ENCODE measurements at regions of chr11 and their contacts with region 1.

Region 1: GRCh38 chr11:8263769-8264410 is at the start of gene LMO1:
- DNase-seq: peak; percentile 37 to 75 (median 63)
- ATAC-seq: peak; percentile 76
- H3K4me3 ChIP-seq: peak within 1 kb of the TSS; percentile 33
- H3K4me3 Mint-ChIP-seq: peak within 1 kb of the TSS; percentile 46 to 93 (median 79)
- H3K27ac ChIP-seq: no peak within 1 kb of the TSS
- H3K27ac Mint-ChIP-seq: peak within 1 kb of the TSS in 1 of 9 donors; percentile 74
- H3K4me1 ChIP-seq: peaks cover 0 to 10% of the 10 kb centered on the region in 2 donors
- H3K4me1 Mint-ChIP-seq: peaks cover 9 to 13% (median 12%) of the 10 kb centered on the region in 7 donors
- H3K27me3 ChIP-seq: peaks cover 0 to 16% of the 10 kb centered on the region in 2 donors
- H3K27me3 Mint-ChIP-seq: peaks cover 58 to 78% (median 67%) of the 10 kb centered on the region in 5 donors
- total RNA-seq, gene LMO1: not detected

Region 2: DNA sequence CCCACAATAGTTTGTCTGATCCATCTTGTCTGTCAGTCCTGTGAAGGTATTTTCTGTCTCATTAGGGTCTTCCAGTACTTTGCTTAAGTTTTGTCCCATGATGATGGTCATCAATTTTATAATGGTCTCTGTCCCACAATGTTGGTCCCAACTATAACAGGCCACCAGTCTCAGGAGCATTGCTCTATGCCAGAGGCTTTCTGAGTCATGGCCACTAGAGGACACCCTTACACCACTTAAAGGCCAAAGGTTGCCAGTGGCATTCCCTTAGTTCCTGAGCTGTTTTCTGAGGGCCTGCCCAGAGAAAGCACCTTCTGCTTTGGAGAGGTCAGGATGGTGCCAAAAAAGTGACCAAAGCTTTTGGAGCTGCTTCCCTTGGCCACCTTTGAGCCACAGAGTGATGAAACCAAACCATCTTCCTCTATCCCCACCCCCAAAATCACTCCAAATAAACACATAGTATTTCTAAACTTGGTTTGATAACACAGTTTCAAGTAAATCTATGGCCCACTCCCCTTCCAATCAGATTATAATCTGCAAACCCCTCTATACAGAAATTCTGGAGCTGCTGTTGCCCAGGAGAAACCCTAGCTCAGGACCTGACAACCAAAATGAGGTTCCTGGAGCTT is 257.4 kb before region 1 on chr11:
- CTCF ChIA-PET with region 1: interaction called, 3 read pairs
- POLR2A ChIA-PET with region 1: no interaction called
- intact Hi-C with region 1: loop called (anchors 2 to 10 kb)
- DNase-seq: peak in 6 of 9 donors; percentile 19 to 34 (median 28)
- ATAC-seq: peak; percentile 81
- H3K4me3 ChIP-seq: no peak overlapping the region
- H3K4me3 Mint-ChIP-seq: no peak overlapping the region
- H3K27ac ChIP-seq: no peak overlapping the region
- H3K27ac Mint-ChIP-seq: no peak overlapping the region
- H3K4me1 ChIP-seq: no peaks in the 10 kb centered on the region
- H3K4me1 Mint-ChIP-seq: no peaks in the 10 kb centered on the region
- H3K27me3 ChIP-seq: no peaks in the 10 kb centered on the region
- H3K27me3 Mint-ChIP-seq: peaks cover 0 to 11% (median 6%) of the 10 kb centered on the region in 5 donors

Region 3: GRCh38 chr11:8056810-8057463 is 207.0 kb before region 1 on chr11:
- CTCF ChIA-PET with region 1: no interaction called
- POLR2A ChIA-PET with region 1: no interaction called
- intact Hi-C with region 1: no loop called
- DNase-seq: no peak
- ATAC-seq: no peak
- H3K4me3 ChIP-seq: no peak overlapping the region
- H3K4me3 Mint-ChIP-seq: no peak overlapping the region
- H3K27ac ChIP-seq: no peak overlapping the region
- H3K27ac Mint-ChIP-seq: no peak overlapping the region
- H3K4me1 ChIP-seq: no peaks in the 10 kb centered on the region
- H3K4me1 Mint-ChIP-seq: peaks cover 0 to 5% (median 0%) of the 10 kb centered on the region in 7 donors
- H3K27me3 ChIP-seq: no peaks in the 10 kb centered on the region
- H3K27me3 Mint-ChIP-seq: peaks cover 0 to 19% (median 12%) of the 10 kb centered on the region in 5 donors

Region 4: DNA sequence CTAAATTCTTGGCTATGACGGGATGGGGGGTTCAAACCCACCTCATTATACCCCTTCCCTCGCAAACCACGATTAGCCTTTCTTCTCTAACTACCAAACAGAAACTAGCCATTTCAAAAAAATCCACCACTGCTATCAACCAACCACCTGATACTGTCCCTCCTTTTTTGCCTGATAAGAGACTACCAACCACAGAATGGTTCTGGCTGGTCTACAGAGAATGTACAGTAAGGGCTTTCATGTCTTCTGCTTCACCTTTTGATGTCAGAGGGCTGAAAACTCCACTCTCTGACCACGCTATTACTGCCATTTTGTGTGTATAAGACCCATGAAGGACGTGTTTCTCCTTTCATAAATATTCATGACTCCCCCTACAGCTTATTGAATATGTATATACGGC is 114.2 kb before region 1 on chr11:
- CTCF ChIA-PET with region 1: no interaction called
- POLR2A ChIA-PET with region 1: no interaction called
- intact Hi-C with region 1: no loop called
- DNase-seq: no peak
- ATAC-seq: no peak
- H3K4me3 ChIP-seq: no peak overlapping the region
- H3K4me3 Mint-ChIP-seq: no peak overlapping the region
- H3K27ac ChIP-seq: no peak overlapping the region
- H3K27ac Mint-ChIP-seq: no peak overlapping the region
- H3K4me1 ChIP-seq: no peaks in the 10 kb centered on the region
- H3K4me1 Mint-ChIP-seq: peaks cover 0 to 5% (median 0%) of the 10 kb centered on the region in 7 donors
- H3K27me3 ChIP-seq: no peaks in the 10 kb centered on the region
- H3K27me3 Mint-ChIP-seq: no peaks in the 10 kb centered on the region

Region 5: GRCh38 chr11:8192016-8192895 is 71.6 kb before region 1 on chr11:
- CTCF ChIA-PET with region 1: interaction called, 3 read pairs
- POLR2A ChIA-PET with region 1: no interaction called
- intact Hi-C with region 1: loop called (anchors 1 to 2 kb)
- DNase-seq: peak in 5 of 9 donors; percentile 10 to 30 (median 19)
- ATAC-seq: peak; percentile 75
- H3K4me3 ChIP-seq: no peak overlapping the region
- H3K4me3 Mint-ChIP-seq: no peak overlapping the region
- H3K27ac ChIP-seq: no peak overlapping the region
- H3K27ac Mint-ChIP-seq: no peak overlapping the region
- H3K4me1 ChIP-seq: no peaks in the 10 kb centered on the region
- H3K4me1 Mint-ChIP-seq: peaks cover 0 to 3% (median 0%) of the 10 kb centered on the region in 7 donors
- H3K27me3 ChIP-seq: no peaks in the 10 kb centered on the region
- H3K27me3 Mint-ChIP-seq: peaks cover 4 to 46% (median 42%) of the 10 kb centered on the region in 5 donors

Region 6: GRCh38 chr11:8225589-8226036 is 38.3 kb before region 1 on chr11:
- CTCF ChIA-PET with region 1: interaction called, 8 read pairs
- POLR2A ChIA-PET with region 1: no interaction called
- intact Hi-C with region 1: loop called (anchors 1 kb)
- DNase-seq: peak; percentile 11 to 66 (median 48)
- ATAC-seq: peak; percentile 65
- H3K4me3 ChIP-seq: no peak overlapping the region
- H3K4me3 Mint-ChIP-seq: no peak overlapping the region
- H3K27ac ChIP-seq: no peak overlapping the region
- H3K27ac Mint-ChIP-seq: no peak overlapping the region
- H3K4me1 ChIP-seq: no peaks in the 10 kb centered on the region
- H3K4me1 Mint-ChIP-seq: peaks cover 0 to 4% (median 0%) of the 10 kb centered on the region in 7 donors
- H3K27me3 ChIP-seq: no peaks in the 10 kb centered on the region
- H3K27me3 Mint-ChIP-seq: peaks cover 0 to 6% (median 0%) of the 10 kb centered on the region in 5 donors

Region 7: DNA sequence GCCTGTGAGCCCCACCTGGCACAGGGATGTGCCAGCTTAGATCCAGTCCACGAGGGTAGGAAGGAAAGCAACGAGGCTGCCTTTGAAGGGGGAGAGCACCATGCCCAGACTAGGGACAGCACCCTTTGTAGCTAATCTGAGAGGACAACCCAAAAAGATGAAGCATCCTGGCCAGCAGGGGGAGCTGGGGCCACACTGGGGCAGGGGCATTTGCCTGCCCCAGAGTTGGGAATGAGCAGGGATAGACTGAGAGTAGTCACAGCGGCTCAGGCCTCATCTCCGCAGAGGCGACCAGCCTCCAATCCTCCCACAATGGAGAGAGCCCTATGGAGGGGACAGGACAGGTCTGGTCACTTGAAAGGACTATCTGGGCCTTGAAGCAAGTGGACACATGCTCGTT is 16.6 kb before region 1 on chr11:
- CTCF ChIA-PET with region 1: no interaction called
- POLR2A ChIA-PET with region 1: no interaction called
- intact Hi-C with region 1: loop called in 1 of 2 experiments (anchors 2 kb)
- DNase-seq: no peak
- ATAC-seq: no peak
- H3K4me3 ChIP-seq: no peak overlapping the region
- H3K4me3 Mint-ChIP-seq: no peak overlapping the region
- H3K27ac ChIP-seq: no peak overlapping the region
- H3K27ac Mint-ChIP-seq: no peak overlapping the region
- H3K4me1 ChIP-seq: no peaks in the 10 kb centered on the region
- H3K4me1 Mint-ChIP-seq: no peaks in the 10 kb centered on the region
- H3K27me3 ChIP-seq: no peaks in the 10 kb centered on the region
- H3K27me3 Mint-ChIP-seq: peaks cover 3 to 8% (median 6%) of the 10 kb centered on the region in 5 donors

Region 8: DNA sequence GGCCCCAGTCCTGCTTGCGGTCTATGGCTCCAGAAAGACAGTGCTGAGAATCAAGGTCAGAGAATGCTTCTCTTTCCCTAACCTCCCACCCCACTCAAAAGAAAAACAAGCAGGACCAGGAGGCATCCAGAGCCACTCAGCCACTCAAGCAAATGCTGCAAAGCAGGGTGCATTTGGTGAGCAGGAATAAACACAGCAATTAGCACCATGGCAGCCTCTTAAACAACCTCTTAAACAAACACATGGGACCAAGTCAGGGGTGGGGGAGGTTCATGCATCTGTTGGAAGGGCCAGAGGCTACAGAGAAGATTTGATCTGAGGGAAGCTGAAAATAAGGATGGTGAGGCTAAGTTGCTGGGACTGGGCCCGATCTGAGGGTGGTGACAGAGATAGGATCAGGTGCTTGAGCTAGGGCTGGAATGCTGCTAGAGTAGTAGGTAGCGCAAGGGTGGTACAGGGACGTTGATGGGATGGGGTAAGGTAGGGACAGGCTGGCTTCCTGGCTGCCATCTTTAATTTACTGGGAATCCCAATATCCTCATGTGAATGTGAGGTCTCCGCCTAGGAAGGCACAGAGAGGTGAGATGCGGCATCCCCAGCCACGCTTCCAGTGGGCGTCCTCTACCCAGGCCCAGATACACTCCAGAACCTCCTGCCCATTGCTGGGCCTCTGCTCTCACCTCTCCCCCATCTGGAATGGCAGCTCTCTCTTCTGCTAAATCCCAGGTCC is 26.4 kb after region 1 on chr11:
- CTCF ChIA-PET with region 1: no interaction called
- POLR2A ChIA-PET with region 1: no interaction called
- intact Hi-C with region 1: no loop called
- DNase-seq: no peak
- ATAC-seq: no peak
- H3K4me3 ChIP-seq: no peak overlapping the region
- H3K4me3 Mint-ChIP-seq: no peak overlapping the region
- H3K27ac ChIP-seq: no peak overlapping the region
- H3K27ac Mint-ChIP-seq: no peak overlapping the region
- H3K4me1 ChIP-seq: no peaks in the 10 kb centered on the region
- H3K4me1 Mint-ChIP-seq: peaks cover 0 to 1% (median 0%) of the 10 kb centered on the region in 7 donors
- H3K27me3 ChIP-seq: no peaks in the 10 kb centered on the region
- H3K27me3 Mint-ChIP-seq: peaks cover 0 to 11% (median 4%) of the 10 kb centered on the region in 5 donors

Region 9: GRCh38 chr11:9231848-9232177 is 967.9 kb after region 1 on chr11:
- CTCF ChIA-PET with region 1: no interaction called
- POLR2A ChIA-PET with region 1: no interaction called
- intact Hi-C with region 1: no loop called
- DNase-seq: peak in 4 of 9 donors; percentile 17 to 40 (median 36)
- ATAC-seq: peak; percentile 72
- H3K4me3 ChIP-seq: peak overlapping the region; percentile 27
- H3K4me3 Mint-ChIP-seq: peak overlapping the region; percentile 73 to 89 (median 84)
- H3K27ac ChIP-seq: no peak overlapping the region
- H3K27ac Mint-ChIP-seq: peak overlapping the region; percentile 56 to 90 (median 81)
- H3K4me1 ChIP-seq: peaks cover 0 to 22% of the 10 kb centered on the region in 2 donors
- H3K4me1 Mint-ChIP-seq: peaks cover 52 to 79% (median 72%) of the 10 kb centered on the region in 7 donors
- H3K27me3 ChIP-seq: no peaks in the 10 kb centered on the region
- H3K27me3 Mint-ChIP-seq: no peaks in the 10 kb centered on the region

Measured in naive thymus-derived CD4-positive, alpha-beta T cell (primary cell).